Lower leg skin (tissue), 4 donors: ENCODE measurements at regions of chr7 and their contacts with region 1.

Region 1: DNA sequence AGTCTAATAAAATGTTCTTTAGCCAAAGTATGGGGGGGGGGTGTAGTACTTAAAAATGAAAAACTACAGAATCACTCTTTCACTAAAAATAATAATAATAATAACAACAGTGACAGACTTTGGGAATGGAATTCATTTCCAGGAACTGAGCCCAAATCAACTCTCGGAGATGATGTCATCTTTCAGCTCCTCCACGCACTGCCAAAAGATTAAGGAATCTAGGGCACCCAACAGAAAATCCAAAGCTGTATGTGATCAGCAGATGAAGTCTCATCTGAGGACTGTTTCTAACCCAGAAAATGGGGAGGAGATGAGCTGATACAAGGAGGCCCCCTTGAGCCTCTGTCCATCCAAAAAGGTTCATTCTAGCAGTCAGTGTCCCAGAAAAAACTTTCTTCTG is 54.5 kb downstream of the GRB10 start:
- DNase-seq: no peak
- H3K4me3 ChIP-seq: no peak overlapping the region
- CTCF ChIP-seq: no peak
- POLR2A ChIP-seq: no peak

Region 2: DNA sequence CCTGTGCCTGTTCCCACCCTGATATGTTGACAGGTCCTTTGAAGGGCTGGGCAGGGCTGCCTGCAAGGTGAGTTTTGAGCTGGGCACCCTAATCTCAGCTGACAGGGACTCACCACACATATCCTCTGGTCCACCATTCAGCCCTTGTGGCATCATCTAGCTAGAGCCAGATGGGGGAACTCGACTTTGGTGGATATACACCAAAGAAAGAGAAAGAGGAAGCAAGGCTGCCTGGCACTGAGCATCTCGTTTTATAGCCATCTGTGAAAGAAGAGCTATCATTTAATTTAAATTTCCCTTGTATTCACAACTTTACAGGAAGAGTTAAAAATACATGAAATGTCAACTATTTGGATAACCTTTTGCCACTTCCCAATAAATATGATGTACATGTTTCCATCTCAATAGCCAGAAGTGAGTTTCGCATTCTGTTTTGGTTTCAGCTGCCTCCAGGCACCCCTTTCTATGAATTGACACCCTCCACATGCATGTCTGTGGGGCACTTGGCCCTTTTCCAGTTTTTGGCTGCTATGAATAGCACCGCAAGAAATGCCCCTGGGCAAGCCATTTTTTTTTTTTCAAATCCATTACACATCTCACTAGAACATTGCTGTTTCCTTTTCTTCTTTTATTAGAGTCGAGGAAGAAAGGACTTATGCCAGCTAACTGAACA is 77.4 kb after region 1 on chr7:
- intact Hi-C with region 1: loop called (anchors 10 kb)
- DNase-seq: no peak
- H3K4me3 ChIP-seq: no peak overlapping the region
- CTCF ChIP-seq: no peak
- POLR2A ChIP-seq: no peak